Sigmoid colon (tissue), 7 donors: ENCODE measurements at regions of chr5 and their contacts with region 1.

Region 1: DNA sequence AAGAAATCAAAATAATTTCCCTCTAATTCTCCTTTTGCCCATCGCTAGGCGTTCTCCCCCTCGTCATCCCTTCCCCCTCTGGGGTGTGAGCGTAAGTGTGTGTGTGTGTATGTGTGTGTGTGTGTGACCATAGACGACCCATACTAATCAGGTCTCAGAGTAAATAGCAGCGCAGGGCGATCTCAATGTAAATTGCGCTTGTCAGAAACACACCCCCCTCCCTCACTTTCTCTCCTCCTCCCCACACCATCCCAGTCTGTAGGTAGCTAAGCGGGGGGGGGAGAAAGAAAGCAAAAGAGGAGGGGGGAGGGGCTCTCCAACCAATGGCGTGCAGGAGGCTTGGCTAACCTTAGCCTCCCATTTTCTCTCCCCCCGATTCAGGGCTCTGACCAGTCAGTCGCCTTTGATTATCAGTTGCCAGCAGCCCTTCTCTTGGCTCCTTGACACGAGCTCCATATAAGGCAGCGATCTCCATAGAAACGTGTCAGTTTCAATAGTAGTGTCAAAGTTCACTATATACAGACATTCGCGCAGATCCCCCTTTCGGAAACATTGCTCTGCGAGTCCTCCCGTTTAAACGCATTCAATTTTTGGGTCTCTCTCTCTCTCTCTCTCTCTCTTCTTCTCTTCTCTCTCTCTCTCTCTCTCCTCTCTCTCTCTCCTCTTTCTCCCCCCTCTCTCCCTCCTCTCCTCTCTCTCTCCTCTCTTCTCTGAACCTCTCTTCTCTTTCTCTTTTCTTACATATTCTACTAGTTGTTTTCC is at the start of gene NR2F1:
- DNase-seq: peak; percentile 94
- H3K4me3 ChIP-seq: peak within 1 kb of the TSS; percentile 39 to 63 (median 58)
- H3K27ac ChIP-seq: peak within 1 kb of the TSS; percentile 66 to 90 (median 73)
- H3K4me1 ChIP-seq: peaks cover 0 to 52% (median 48%) of the 10 kb centered on the region in 4 donors
- H3K27me3 ChIP-seq: peaks cover 9 to 92% (median 48%) of the 10 kb centered on the region in 3 donors
- CTCF ChIP-seq: peak in 3 of 4 experiments; percentile 53 to 92 (median 90)
- EP300 ChIP-seq: no peak
- POLR2A ChIP-seq: no peak
- total RNA-seq, gene NR2F1: 16.3 to 24.1 (median 17.5) TPM

Region 2: DNA sequence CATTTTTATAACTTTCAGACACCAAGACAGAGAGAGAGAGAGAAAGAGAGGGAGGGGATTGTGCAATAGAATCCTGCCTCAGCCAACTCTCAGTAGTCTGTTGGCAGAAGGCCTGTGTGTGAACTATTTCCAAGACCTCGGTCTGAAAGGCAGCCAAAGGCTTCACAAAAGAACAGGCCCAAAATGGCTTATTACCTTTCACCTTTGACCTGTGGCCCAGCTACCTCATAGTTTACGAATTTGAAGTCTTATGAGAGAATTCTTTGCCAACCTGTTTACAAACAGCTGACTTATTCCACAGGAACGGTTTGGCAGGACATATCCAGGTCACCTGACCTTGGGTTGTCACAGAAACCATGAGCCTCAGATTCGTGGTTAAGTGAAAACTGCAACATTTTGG is 50.5 kb before region 1 on chr5:
- intact Hi-C with region 1: loop called (anchors 5 kb)
- DNase-seq: peak; percentile 93
- H3K4me3 ChIP-seq: no peak overlapping the region
- H3K27ac ChIP-seq: peak overlapping the region in 3 of 4 donors; percentile 50 to 61 (median 50)
- H3K4me1 ChIP-seq: peaks cover 0 to 21% (median 9%) of the 10 kb centered on the region in 4 donors
- H3K27me3 ChIP-seq: no peaks in the 10 kb centered on the region
- CTCF ChIP-seq: no peak
- EP300 ChIP-seq: no peak
- POLR2A ChIP-seq: no peak

Region 3: DNA sequence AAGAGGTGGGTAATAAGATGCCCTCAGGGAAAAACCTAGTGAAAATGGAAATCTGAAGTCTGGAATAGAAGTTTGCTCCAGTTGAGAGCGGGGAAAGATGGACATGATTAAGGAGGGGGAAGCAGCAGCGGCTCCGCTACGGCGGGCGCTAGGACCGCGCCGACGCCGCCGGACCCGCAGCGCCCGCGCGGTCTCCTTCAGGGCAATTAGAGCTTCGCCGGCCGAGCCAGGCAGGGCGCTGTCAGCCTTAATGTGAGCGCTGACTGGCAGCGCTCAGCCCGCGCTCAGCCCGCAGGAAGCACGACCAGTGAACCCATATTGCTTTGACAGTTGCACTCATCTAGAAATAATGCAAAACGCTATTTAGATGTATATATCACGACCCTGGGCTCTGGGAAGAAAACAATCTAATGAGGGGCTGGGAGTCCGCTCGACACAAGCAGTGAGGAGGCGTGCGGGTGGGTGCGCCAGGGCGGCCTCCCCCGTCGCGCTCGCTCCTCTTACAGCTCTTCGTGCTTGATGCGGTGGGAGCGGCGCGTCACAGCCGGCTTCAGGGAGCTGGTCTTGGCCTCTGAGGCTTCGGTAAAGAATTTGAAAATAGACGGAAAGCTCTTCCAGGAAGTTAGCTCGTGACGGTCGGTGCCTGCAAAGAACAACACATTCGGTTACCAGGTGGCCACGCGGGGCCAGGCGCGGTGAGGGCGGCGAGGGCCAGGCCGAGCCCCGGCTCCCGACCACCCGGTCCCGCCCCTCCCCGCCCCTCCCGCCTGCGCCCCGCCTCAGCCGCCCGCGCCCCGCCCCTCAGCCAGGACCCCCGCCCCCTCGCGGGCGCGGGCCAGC is 37.8 kb after region 1 on chr5:
- intact Hi-C with region 1: loop called (anchors 5 kb)
- DNase-seq: peak; percentile 72
- H3K4me3 ChIP-seq: peak overlapping the region; percentile 41 to 73 (median 66)
- H3K27ac ChIP-seq: peak overlapping the region; percentile 73 to 88 (median 79)
- H3K4me1 ChIP-seq: peaks cover 0 to 9% (median 6%) of the 10 kb centered on the region in 4 donors
- H3K27me3 ChIP-seq: no peaks in the 10 kb centered on the region
- CTCF ChIP-seq: no peak
- EP300 ChIP-seq: no peak
- POLR2A ChIP-seq: no peak

Region 4: DNA sequence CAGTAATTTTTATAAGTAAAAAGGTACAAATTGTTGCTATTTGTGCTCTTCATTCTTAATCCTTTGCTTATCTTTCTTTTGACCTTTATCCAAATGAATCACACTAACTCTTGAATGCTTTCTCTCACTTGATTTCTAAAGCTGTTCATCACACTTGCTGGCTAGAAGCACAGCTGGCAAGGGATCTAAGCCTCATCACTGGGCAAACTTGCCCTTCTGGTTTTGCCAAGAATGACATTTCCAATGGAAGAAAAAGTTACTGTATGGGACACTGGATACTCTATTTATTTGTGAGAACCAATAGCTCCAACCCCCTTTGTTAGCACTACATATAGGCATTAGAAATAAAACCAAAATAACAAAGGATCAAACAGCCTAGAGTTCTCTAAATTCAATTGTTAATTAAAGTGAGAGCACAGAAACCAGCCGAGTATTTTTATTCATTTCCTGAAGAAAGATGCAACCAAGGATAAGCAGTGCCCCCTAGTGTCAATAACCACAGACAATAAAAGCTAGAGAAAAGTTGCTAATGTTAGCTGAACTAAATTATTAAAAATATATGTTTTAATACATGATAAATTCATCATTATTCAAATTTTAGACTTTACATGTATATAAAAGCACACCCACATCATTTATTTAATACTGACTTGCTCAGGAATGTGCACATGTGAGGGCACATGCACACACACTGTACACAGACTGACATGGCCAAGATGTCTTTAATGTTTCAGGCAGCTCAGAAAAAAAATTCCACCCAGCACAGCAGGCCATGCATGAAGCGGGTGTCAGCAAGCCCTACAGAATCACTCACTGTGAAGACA is 218.3 kb after region 1 on chr5:
- intact Hi-C with region 1: loop called (anchors 2 kb)
- DNase-seq: no peak
- H3K4me3 ChIP-seq: no peak overlapping the region
- H3K27ac ChIP-seq: no peak overlapping the region
- H3K4me1 ChIP-seq: no peaks in the 10 kb centered on the region
- H3K27me3 ChIP-seq: no peaks in the 10 kb centered on the region
- CTCF ChIP-seq: peak in 3 of 4 experiments; percentile 45 to 58 (median 50)
- EP300 ChIP-seq: no peak
- POLR2A ChIP-seq: no peak

Region 5: GRCh38 chr5:94111209-94112004 is 528.5 kb after region 1 on chr5:
- intact Hi-C with region 1: loop called (anchors 10 kb)
- DNase-seq: peak; percentile 97
- H3K4me3 ChIP-seq: peak overlapping the region; percentile 70 to 92 (median 76)
- H3K27ac ChIP-seq: peak overlapping the region; percentile 89 to 90 (median 90)
- H3K4me1 ChIP-seq: peaks cover 0 to 14% (median 10%) of the 10 kb centered on the region in 4 donors
- H3K27me3 ChIP-seq: no peaks in the 10 kb centered on the region
- CTCF ChIP-seq: peak in 1 of 4 experiments; percentile 9
- EP300 ChIP-seq: peak in 1 of 4 donors; percentile 57
- POLR2A ChIP-seq: peak; percentile 42 to 55